Activated CD4-positive, alpha-beta memory T cell treated with anti-CD3 and anti-CD28 coated beads for 36 hours (primary cell): ENCODE measurements at regions of chr9 and their contacts with region 1.

Region 1: DNA sequence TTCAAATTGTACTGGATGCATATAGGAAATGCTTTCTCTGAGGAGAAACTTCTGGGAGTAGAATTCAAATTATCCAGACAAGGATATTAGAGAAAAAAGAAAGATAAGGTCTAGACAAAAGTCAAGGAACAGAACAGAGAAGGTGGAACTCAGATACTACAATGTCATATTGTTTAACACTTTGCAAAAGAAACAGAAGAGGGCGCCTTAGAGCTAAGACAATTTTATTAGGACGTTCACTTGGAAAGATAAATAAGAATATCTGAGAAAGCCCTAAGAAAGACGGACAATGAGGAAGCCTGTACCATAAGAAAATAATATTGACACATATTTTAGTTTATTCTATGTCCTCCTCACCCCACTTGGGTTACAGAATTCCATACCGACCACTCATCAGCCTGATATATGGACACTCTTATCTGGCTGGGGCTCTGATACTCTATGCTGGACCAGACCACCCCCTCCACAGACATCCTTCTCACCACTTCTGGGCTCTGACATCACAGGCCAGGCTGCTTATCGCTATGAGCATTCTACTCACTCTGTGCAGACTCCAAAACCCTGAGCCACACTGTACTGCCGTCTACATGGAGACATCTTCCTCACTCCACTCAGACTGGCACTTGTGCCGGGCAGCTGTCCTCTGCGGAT is 9.1 kb upstream of the AK3 start:
- DNase-seq: no peak
- H3K4me3 Mint-ChIP-seq: no peak overlapping the region
- H3K27ac Mint-ChIP-seq: no peak overlapping the region
- H3K4me1 Mint-ChIP-seq: peaks cover 20% of the 10 kb centered on the region
- H3K27me3 Mint-ChIP-seq: no peaks in the 10 kb centered on the region

Region 2: GRCh38 chr9:4382722-4383317 is 367.3 kb before region 1 on chr9:
- CTCF ChIA-PET with region 1: interaction called, 4 read pairs
- POLR2A ChIA-PET with region 1: no interaction called
- intact Hi-C with region 1: loop called (anchors 10 kb)
- DNase-seq: no peak
- H3K4me3 Mint-ChIP-seq: no peak overlapping the region
- H3K27ac Mint-ChIP-seq: no peak overlapping the region
- H3K4me1 Mint-ChIP-seq: no peaks in the 10 kb centered on the region
- H3K27me3 Mint-ChIP-seq: no peaks in the 10 kb centered on the region

Region 3: DNA sequence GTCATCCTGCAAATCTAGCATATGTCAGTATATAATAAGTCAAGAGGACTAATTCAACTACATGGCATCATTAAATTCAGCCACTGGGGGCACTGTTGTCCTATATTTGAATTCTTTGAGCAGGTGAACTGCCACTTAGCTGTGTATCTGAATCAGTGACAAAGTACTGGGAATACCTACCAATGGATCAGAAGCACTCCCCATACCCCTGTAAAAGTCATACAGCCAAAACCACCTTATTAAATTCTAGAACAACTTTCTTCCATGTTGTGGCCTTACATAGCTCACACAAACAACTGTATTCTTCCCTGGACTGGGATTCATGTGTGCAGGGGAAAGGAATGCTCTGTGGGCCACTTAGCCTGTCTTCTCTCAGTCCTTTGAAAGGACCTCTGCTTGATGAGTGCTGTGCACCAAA is 145.5 kb before region 1 on chr9:
- CTCF ChIA-PET with region 1: interaction called, 24 read pairs
- POLR2A ChIA-PET with region 1: no interaction called
- intact Hi-C with region 1: no loop called
- DNase-seq: peak; percentile 64
- H3K4me3 Mint-ChIP-seq: no peak overlapping the region
- H3K27ac Mint-ChIP-seq: no peak overlapping the region
- H3K4me1 Mint-ChIP-seq: peaks cover 24% of the 10 kb centered on the region
- H3K27me3 Mint-ChIP-seq: no peaks in the 10 kb centered on the region

Region 4: DNA sequence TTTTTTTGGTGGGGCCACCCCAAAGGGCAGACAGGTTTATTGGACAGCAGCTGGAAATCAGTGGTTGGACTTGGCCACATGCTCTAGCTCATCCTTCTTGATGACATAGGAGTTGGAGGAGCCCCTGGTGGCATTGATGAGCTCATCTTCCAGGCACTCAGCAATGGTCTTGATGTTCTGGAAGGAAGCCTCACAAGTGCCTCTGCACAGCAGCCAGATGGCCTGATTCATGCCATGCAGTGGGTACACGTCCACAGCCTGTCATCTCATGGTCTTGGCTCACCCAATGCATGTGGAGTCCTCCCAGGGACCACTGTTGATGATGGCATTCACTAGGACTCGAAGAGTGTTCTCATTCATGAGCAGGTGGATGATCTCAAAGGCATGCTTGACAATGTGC is 31.3 kb after region 1 on chr9:
- CTCF ChIA-PET with region 1: no interaction called
- POLR2A ChIA-PET with region 1: no interaction called
- intact Hi-C with region 1: no loop called
- DNase-seq: no peak
- H3K4me3 Mint-ChIP-seq: no peak overlapping the region
- H3K27ac Mint-ChIP-seq: no peak overlapping the region
- H3K4me1 Mint-ChIP-seq: no peaks in the 10 kb centered on the region
- H3K27me3 Mint-ChIP-seq: peaks cover 6% of the 10 kb centered on the region